Sigmoid colon (tissue), 7 donors: ENCODE measurements at regions of chrX and their contacts with region 1.

Region 1: GRCh38 chrX:153708415-153708814 is 15.8 kb downstream of the BCAP31 start:
- DNase-seq: peak; percentile 89
- H3K4me3 ChIP-seq: no peak overlapping the region
- H3K27ac ChIP-seq: peak overlapping the region in 2 of 4 donors; percentile 34 to 53
- H3K4me1 ChIP-seq: peaks cover 0 to 25% (median 8%) of the 10 kb centered on the region in 4 donors
- H3K27me3 ChIP-seq: no peaks in the 10 kb centered on the region
- CTCF ChIP-seq: peak; percentile 55 to 62 (median 61)
- EP300 ChIP-seq: no peak
- POLR2A ChIP-seq: no peak

Region 2: DNA sequence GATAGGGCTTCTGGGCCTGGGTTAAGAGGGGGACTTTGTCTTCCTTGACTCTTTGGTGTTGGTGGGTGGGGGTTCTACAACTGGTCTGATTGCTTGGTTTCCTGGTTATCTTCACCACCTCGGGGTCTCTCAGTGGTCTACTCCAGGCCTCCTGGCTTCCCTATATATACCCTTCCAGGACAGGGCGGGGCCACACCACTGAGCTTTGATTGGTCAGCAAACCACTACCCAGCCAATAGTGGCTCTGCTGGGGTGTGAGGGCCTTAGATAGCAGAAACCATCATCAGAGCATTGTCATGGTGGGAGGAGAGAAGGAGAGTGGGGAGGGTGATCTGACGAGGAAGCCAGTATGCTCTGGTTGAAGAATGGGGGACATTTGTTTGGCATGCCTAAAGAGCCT is 543.7 kb before region 1 on chrX:
- intact Hi-C with region 1: no loop called
- DNase-seq: no peak
- H3K4me3 ChIP-seq: no peak overlapping the region
- H3K27ac ChIP-seq: no peak overlapping the region
- H3K4me1 ChIP-seq: no peaks in the 10 kb centered on the region
- H3K27me3 ChIP-seq: no peaks in the 10 kb centered on the region
- CTCF ChIP-seq: no peak
- EP300 ChIP-seq: no peak
- POLR2A ChIP-seq: no peak

Region 3: GRCh38 chrX:153609917-153610428 is 98.4 kb before region 1 on chrX:
- intact Hi-C with region 1: loop called (anchors 5 kb)
- DNase-seq: peak; percentile 84
- H3K4me3 ChIP-seq: peak overlapping the region; percentile 23 to 53 (median 45)
- H3K27ac ChIP-seq: peak overlapping the region in 2 of 4 donors; percentile 19 to 41
- H3K4me1 ChIP-seq: peaks cover 0 to 13% (median 2%) of the 10 kb centered on the region in 4 donors
- H3K27me3 ChIP-seq: peaks cover 0 to 3% (median 0%) of the 10 kb centered on the region in 3 donors
- CTCF ChIP-seq: peak; percentile 42 to 71 (median 56)
- EP300 ChIP-seq: no peak
- POLR2A ChIP-seq: no peak

Region 4: GRCh38 chrX:153667956-153668396 is 40.4 kb before region 1 on chrX:
- intact Hi-C with region 1: loop called (anchors 5 kb)
- DNase-seq: peak; percentile 94
- H3K4me3 ChIP-seq: no peak overlapping the region
- H3K27ac ChIP-seq: peak overlapping the region; percentile 27 to 79 (median 72)
- H3K4me1 ChIP-seq: peaks cover 0 to 3% (median 0%) of the 10 kb centered on the region in 4 donors
- H3K27me3 ChIP-seq: peaks cover 0 to 7% (median 0%) of the 10 kb centered on the region in 3 donors
- CTCF ChIP-seq: peak; percentile 28 to 74 (median 68)
- EP300 ChIP-seq: no peak
- POLR2A ChIP-seq: no peak

Region 5: DNA sequence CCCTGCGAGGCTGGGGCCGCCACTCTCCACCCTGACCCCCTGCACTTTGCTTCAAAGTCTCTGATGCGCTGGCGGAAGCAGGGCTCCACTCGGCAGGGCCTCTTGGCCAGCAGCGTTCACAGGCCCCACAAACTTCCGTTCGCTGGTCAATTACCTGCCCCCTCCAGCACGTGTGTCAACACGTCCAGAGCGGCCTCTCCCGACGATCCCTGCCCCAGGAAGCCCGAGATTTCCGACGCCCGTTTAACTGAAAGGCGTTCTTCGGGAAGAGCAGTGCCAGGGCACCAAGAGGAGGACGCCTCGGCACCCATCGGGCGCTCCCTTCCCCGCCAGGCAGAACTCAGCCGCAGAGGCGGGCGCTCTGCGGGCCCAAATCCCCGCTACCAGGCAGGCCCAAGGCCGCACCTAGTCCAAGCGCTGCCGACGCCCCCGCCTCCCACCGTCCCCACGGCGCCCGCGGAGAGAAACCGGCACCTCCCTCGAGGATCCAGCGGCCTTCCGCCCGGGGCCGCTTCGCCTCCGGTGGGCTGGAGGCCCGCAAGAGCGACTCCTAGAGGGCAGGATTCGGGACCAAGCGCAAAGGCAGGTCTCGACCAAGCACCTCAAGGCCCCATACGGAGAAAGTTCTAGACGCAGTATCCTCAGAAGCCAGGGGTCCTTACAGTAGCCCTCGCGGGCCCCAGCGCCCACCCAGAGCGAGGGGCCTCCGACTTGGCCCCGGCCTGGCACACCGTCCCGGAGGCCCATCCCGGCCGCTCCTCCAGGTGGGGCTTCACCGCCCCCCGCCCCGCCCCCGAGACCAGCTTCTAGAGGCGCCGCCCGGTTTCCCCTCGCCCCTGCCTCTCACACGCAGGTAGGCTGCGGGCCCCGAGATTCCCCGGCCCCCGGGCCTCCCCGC is 15.2 kb after region 1 on chrX:
- intact Hi-C with region 1: loop called (anchors 2 kb)
- DNase-seq: no peak
- H3K4me3 ChIP-seq: peak overlapping the region; percentile 62 to 78 (median 72)
- H3K27ac ChIP-seq: peak overlapping the region; percentile 86 to 93 (median 91)
- H3K4me1 ChIP-seq: peaks cover 0 to 52% (median 49%) of the 10 kb centered on the region in 4 donors
- H3K27me3 ChIP-seq: no peaks in the 10 kb centered on the region
- CTCF ChIP-seq: peak in 1 of 4 experiments; percentile 17
- EP300 ChIP-seq: no peak
- POLR2A ChIP-seq: no peak